Sciatic nerve (tissue), 2 donors: ENCODE measurements at regions of chr1 and their contacts with region 1.

Region 1: GRCh38 chr1:156499842-156500546 is 581 bp downstream of the MEF2D start:
- DNase-seq: peak; percentile 82
- ATAC-seq: peak; percentile 9

Region 2: GRCh38 chr1:156461781-156462647 is 38.0 kb before region 1 on chr1:
- intact Hi-C with region 1: loop called (anchors 5 kb)
- DNase-seq: no peak
- ATAC-seq: no peak

Region 3: DNA sequence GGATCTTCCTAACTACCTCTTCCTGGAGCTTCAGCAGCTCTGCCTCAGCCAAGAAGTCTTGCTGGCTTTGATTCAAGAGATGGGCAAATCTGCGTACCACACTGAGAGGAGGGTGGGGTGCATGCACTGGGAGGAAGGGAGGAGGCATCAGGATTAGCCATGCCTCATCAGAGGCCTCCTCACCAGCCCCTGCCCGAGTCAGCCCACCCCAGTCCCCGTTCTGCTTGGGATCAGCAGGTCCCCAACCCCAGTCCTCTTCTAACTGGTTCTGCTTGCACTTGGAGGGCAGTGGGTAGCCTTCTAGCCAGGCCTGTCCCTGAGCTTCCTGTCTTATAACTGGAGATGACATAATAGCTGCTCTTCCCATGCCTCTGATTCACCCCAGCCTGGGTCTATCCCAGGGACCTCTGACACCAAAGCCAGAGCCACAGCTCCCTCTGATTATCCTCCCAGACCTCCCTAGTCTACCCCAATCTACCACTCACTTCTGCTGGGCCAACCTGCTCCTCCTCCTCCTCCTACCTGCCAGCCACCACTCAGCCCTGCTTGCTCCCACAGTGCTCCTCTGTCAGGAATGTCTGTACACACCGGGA is 40.9 kb after region 1 on chr1:
- intact Hi-C with region 1: no loop called
- DNase-seq: no peak
- ATAC-seq: peak; percentile 35